ENCODE measurements at regions of chr9 and their contacts with region 1.

Region 1: GRCh38 chr9:127869310-127870152 is 7.9 kb downstream of the AK1 start:
- DNase-seq: peak; percentile 67
- H3K4me3 ChIP-seq: no peak overlapping the region
- H3K27ac ChIP-seq: no peak overlapping the region
- H3K4me1 ChIP-seq: peaks cover 11% of the 10 kb centered on the region
- H3K27me3 ChIP-seq: no peaks in the 10 kb centered on the region
- CTCF ChIP-seq: peak; percentile 76 to 89

Region 2: GRCh38 chr9:127734747-127735529 is 134.6 kb before region 1 on chr9 and contains the start of gene TOR2A:
- CTCF ChIA-PET with region 1: interaction called, 3 read pairs
- dilution Hi-C with region 1: no loop called
- in situ Hi-C with region 1: no loop called
- intact Hi-C with region 1: loop called (anchors 1 kb)
- DNase-seq: peak; percentile 95
- H3K4me3 ChIP-seq: peak within 1 kb of the TSS; percentile 59 to 62 (median 61)
- H3K27ac ChIP-seq: peak within 1 kb of the TSS; percentile 51
- H3K4me1 ChIP-seq: peaks cover 20% of the 10 kb centered on the region
- H3K27me3 ChIP-seq: no peaks in the 10 kb centered on the region
- CTCF ChIP-seq: peak; percentile 84 to 94
- total RNA-seq, gene TOR2A: 4.0 to 13.2 TPM

Region 3: DNA sequence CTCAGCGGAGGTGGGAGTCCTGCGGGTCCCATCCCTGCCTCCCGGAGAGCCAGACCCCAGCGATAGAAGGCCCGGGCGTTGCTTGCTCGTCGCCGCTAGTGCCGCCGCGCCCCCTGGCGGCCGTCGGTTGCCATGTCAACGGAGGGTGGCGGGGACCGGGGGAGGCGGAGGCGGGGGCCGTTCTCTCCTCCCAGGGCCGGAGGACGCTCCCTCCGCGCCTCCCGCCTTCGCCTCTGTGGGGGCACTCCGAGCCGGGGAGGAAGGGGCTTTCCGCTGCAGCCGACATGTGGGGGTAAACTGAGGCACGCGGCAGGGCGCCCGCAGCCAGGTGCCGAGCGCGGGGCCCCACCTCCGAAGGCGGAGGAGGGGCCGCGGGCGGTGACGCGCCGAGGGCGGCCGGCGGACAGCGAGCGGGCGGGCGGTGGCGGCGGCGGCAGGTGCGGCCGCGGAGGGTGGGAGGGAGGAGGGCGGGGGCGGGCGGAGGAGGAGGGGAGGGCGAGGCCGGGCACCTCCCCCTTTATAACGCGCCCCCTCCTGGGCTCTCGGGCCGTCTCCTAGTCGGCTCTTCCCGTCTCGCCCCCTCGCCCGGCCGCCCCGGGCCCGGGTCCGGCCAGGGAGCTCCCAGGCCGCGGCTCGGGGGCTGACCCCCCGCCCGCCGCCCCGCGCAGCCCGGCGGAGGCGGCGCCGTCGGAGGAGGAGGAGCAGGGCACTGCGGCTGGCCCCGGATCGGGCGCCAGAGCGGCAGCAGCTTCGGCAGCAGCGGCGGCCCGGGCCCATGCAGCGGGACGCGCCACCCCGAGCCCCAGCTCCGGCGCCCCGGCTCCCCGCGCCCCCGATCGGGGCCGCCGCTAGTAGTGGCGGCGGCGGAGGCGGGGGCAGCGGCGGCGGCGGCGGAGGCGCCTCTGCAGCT is 84.3 kb before region 1 on chr9:
- CTCF ChIA-PET with region 1: interaction called, 9 read pairs
- dilution Hi-C with region 1: no loop called
- in situ Hi-C with region 1: no loop called
- intact Hi-C with region 1: loop called (anchors 1 kb)
- DNase-seq: peak; percentile 74
- H3K4me3 ChIP-seq: peak overlapping the region; percentile 47 to 94 (median 70)
- H3K27ac ChIP-seq: peak overlapping the region; percentile 43
- H3K4me1 ChIP-seq: peaks cover 18% of the 10 kb centered on the region
- H3K27me3 ChIP-seq: no peaks in the 10 kb centered on the region
- CTCF ChIP-seq: peak; percentile 35 to 84

Region 4: GRCh38 chr9:127916665-127917613 is 47.4 kb after region 1 on chr9 and contains the start of gene ST6GALNAC4:
- CTCF ChIA-PET with region 1: no interaction called
- dilution Hi-C with region 1: no loop called
- in situ Hi-C with region 1: no loop called
- intact Hi-C with region 1: loop called (anchors 2 kb)
- DNase-seq: peak; percentile 76
- H3K4me3 ChIP-seq: peak within 1 kb of the TSS; percentile 35 to 62 (median 58)
- H3K27ac ChIP-seq: peak within 1 kb of the TSS; percentile 16
- H3K4me1 ChIP-seq: peaks cover 38% of the 10 kb centered on the region
- H3K27me3 ChIP-seq: no peaks in the 10 kb centered on the region
- CTCF ChIP-seq: no peak
- total RNA-seq, gene ST6GALNAC4: 14.3 to 19.6 TPM

Region 5: GRCh38 chr9:127963359-127964064 is 94.0 kb after region 1 on chr9:
- CTCF ChIA-PET with region 1: no interaction called
- dilution Hi-C with region 1: loop called (anchors 5 kb)
- in situ Hi-C with region 1: no loop called
- intact Hi-C with region 1: no loop called
- DNase-seq: no peak
- H3K4me3 ChIP-seq: no peak overlapping the region
- H3K27ac ChIP-seq: no peak overlapping the region
- H3K4me1 ChIP-seq: peaks cover 50% of the 10 kb centered on the region
- H3K27me3 ChIP-seq: no peaks in the 10 kb centered on the region
- CTCF ChIP-seq: no peak

Region 6: DNA sequence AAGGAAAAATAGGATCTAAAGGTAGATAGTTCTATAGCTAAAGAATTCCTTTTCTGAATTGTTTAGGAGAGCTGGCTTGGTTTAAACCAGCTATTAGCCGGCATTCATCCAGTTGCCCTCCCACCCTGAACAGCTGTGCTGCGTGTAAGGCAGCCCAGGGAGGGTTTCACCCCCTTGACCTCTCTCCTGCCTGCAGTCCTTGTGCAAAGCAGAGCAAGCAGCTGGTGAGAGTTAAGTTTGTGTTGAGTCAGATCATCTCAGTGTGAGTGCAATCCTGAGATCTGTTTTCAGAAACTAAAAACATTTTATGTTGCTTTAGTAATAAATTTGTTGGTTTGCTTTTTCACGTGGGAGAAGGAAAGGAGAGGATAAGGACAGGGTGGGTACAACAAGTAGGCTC is 211.5 kb after region 1 on chr9:
- CTCF ChIA-PET with region 1: no interaction called
- dilution Hi-C with region 1: no loop called
- in situ Hi-C with region 1: no loop called
- intact Hi-C with region 1: no loop called
- DNase-seq: no peak
- H3K4me3 ChIP-seq: no peak overlapping the region
- H3K27ac ChIP-seq: no peak overlapping the region
- H3K4me1 ChIP-seq: peaks cover 14% of the 10 kb centered on the region
- H3K27me3 ChIP-seq: no peaks in the 10 kb centered on the region
- CTCF ChIP-seq: no peak

Region 7: DNA sequence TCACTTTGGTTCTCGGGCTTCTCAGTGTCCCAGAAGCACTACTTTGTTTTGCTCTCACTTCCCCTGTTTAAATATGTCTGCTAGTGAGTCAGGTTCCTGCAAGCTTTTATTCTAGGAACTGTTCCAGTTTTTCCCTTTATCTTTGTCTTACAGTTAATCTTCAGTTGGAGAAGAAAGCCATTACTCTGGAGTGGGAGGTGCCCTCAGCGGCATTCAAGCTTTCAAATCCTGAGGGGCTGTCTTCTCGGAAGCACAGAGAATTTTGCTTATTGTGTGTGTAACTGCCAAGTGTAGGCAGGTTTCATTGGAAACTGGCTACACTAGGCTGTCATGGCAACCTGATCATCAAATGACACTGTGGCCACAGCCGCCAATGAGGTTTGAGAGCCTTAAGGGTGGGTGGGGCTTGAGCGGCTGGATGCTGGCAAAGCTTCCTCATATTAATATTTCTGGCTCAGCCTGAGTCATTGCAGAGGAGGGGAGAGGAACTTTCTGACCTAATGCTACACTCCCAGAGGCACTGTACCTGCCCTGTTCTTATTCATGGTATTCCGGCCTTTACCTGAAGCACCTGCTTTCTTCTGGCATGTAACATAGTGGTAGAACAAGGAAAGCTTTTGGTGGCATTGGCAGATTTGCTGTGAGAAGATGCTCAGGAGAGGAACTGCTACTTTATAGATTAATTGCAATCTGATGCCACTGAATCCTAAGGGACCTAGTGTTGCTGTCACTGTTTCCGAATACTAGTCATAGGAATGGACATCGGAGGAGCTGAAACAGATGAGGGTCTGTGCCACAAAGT is 224.8 kb after region 1 on chr9:
- CTCF ChIA-PET with region 1: no interaction called
- dilution Hi-C with region 1: loop called (anchors 5 kb)
- in situ Hi-C with region 1: no loop called
- intact Hi-C with region 1: no loop called
- DNase-seq: peak; percentile 99
- H3K4me3 ChIP-seq: peak overlapping the region in 2 of 3 experiments; percentile 15 to 34
- H3K27ac ChIP-seq: peak overlapping the region; percentile 98
- H3K4me1 ChIP-seq: peaks cover 39% of the 10 kb centered on the region
- H3K27me3 ChIP-seq: no peaks in the 10 kb centered on the region
- CTCF ChIP-seq: no peak

Measured in mammary epithelial cell (primary cell).